ENCODE measurements at regions of chr15 and their contacts with region 1.

Region 1: DNA sequence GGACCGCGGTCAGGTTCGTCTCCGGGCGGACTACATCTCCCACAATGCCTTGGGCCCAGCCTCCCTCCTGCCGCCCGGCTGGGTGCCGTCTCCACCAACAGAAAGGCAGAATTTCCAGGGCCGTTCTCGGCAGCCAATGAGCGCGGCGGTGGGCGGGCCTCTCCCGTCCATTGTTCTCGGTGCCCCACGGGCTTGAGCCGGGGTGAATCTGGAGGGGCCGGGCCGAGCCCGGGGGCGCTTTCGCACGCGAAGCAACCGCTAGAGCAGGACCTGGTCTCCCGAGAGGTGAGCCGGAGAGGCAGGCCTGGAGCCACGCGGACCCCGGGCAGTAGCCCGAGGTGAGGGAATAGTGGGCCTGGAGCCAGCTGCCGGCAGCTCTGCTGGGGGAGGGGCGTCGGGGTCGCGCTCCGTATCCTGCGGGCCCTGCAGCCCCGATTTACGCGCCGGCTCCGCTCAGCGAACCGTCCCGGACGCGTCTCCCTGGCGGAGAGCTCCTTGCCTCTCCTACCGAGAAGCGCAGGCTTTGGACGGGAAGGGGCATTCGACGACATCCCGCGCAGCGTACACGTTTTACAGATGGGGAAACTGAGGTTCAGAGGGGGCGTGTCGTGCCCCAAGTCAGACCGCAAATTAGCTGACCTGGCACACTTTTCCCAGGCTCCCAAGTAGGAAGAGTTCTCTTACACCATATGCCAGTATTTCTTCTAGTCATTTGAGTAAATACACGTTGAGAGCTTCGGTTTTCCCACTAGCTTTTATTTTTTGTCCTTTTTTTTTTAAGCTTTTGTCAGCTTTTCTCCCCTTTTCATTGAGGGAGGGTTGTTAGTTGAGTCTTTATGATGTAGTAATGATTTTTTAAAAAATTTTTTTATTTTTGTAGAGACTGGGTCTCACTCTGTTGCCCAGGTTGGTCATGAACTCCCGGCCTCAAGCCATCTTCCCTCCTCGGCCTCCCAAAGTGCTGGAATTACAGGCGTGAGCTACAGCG is at the start of gene ZSCAN2:
- DNase-seq: peak; percentile 96
- H3K4me3 ChIP-seq: peak within 1 kb of the TSS; percentile 46 to 66 (median 54)
- H3K27ac ChIP-seq: peak within 1 kb of the TSS; percentile 56
- H3K4me1 ChIP-seq: no peaks in the 10 kb centered on the region
- H3K27me3 ChIP-seq: no peaks in the 10 kb centered on the region
- CTCF ChIP-seq: peak in 1 of 2 donors; percentile 10
- POLR2A ChIP-seq: peak; percentile 56
- total RNA-seq, gene ZSCAN2: 13.5 TPM in 2 replicates

Region 2: GRCh38 chr15:84633311-84634227 is 32.4 kb after region 1 on chr15:
- CTCF ChIA-PET with region 1: interaction called, 25 read pairs
- POLR2A ChIA-PET with region 1: no interaction called
- dilution Hi-C with region 1: no loop called
- intact Hi-C with region 1: loop called (anchors 1 kb)
- DNase-seq: peak; percentile 85
- H3K4me3 ChIP-seq: peak overlapping the region; percentile 44 to 66 (median 46)
- H3K27ac ChIP-seq: peak overlapping the region; percentile 28
- H3K4me1 ChIP-seq: peaks cover 26% of the 10 kb centered on the region
- H3K27me3 ChIP-seq: no peaks in the 10 kb centered on the region
- CTCF ChIP-seq: no peak
- POLR2A ChIP-seq: no peak

Region 3: DNA sequence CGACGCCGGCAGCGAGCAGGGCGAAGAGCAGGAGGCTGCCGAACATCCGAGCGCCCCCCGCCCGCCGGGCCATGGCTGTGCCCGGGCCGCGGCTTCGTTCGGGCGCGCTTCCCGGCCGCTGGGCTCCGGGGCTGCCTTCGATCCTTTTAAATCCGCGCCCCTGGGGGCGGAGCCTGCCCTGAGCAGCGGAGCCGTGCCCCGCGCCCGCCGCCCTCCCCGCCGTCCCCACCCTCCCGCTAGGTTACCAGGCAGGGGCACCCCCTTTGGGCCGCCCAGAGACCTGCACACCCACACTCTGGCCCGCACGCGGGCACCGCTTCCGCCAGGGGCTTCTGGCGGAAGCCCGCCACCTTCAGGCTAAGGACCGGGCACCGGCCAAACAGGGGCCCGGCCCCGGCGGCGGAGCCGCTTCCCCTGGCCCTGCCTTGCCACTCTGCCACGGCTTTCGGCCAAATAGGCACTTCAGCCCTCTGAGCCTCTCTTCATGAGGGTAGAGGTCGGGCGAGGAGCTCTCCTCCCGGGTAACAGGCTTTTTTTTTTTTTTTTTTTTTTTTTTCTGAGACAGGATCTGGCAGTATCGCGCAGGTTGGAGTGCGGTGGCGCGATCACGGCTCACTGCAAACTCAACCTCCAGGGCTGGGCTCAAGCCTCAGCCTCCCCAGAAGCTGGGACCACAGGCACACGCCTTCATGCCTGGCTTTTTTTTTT is 57.1 kb after region 1 on chr15 and contains the start of gene NMB:
- CTCF ChIA-PET with region 1: interaction called, 23 read pairs
- POLR2A ChIA-PET with region 1: no interaction called
- dilution Hi-C with region 1: no loop called
- intact Hi-C with region 1: loop called (anchors 1 kb)
- DNase-seq: peak; percentile 75
- H3K4me3 ChIP-seq: peak within 1 kb of the TSS; percentile 36 to 50 (median 47)
- H3K27ac ChIP-seq: peak within 1 kb of the TSS; percentile 49
- H3K4me1 ChIP-seq: peaks cover 23% of the 10 kb centered on the region
- H3K27me3 ChIP-seq: no peaks in the 10 kb centered on the region
- CTCF ChIP-seq: peak; percentile 41 to 56
- POLR2A ChIP-seq: no peak
- total RNA-seq, gene NMB: 9.6 and 9.8 TPM in 2 replicates

Region 4: DNA sequence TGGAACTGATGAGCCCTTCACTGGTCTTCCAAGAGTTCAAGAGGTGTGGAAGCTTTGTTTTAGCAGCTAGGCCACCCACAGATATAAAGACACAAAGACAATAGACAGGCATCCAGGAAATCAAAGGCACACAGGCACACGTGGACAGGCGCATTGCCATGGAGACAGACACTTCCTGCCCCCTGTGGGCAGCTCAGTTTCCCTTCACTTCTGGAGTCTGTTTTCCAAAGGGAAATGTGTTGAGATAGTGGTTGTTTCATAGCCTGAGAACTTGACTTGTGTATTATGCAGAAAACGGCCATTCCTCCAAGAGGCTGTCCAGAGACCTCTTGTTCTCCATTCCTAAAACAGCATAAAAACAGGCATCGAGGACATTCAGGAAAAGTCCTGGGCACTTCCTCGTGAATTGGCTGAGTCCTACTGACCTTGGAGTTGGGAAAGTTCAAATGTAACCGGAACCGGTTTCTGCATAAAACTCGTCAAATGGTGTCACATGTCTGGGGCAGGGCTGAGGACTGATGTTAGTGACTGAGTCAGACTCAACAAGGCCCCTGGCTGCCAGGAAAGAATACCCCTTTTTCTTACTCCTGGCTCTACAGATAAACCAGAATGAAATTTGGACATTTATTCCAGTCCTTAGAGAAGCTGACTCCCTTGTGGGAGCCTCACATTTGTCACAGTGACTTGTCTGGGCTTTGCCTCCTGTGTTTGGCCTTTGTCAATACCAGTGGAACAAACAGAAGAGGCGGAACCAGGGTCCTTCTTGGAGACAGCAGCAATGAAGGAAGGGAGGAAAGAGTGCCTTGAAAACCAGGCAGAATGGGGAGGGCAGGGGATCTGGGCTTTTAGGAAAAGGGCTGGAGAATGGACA is 217.4 kb after region 1 on chr15:
- CTCF ChIA-PET with region 1: interaction called, 16 read pairs
- POLR2A ChIA-PET with region 1: no interaction called
- dilution Hi-C with region 1: no loop called
- intact Hi-C with region 1: loop called (anchors 1 kb)
- DNase-seq: peak; percentile 91
- H3K4me3 ChIP-seq: peak overlapping the region in 2 of 3 experiments; percentile 57 to 58
- H3K27ac ChIP-seq: peak overlapping the region; percentile 88
- H3K4me1 ChIP-seq: peaks cover 42% of the 10 kb centered on the region
- H3K27me3 ChIP-seq: no peaks in the 10 kb centered on the region
- CTCF ChIP-seq: peak in 1 of 2 donors; percentile 2
- POLR2A ChIP-seq: peak; percentile 71

Region 5: GRCh38 chr15:84904419-84904818 is 303.3 kb after region 1 on chr15:
- CTCF ChIA-PET with region 1: no interaction called
- POLR2A ChIA-PET with region 1: no interaction called
- dilution Hi-C with region 1: no loop called
- intact Hi-C with region 1: no loop called
- DNase-seq: no peak
- H3K4me3 ChIP-seq: no peak overlapping the region
- H3K27ac ChIP-seq: no peak overlapping the region
- H3K4me1 ChIP-seq: no peaks in the 10 kb centered on the region
- H3K27me3 ChIP-seq: no peaks in the 10 kb centered on the region
- CTCF ChIP-seq: no peak
- POLR2A ChIP-seq: no peak

Region 6: DNA sequence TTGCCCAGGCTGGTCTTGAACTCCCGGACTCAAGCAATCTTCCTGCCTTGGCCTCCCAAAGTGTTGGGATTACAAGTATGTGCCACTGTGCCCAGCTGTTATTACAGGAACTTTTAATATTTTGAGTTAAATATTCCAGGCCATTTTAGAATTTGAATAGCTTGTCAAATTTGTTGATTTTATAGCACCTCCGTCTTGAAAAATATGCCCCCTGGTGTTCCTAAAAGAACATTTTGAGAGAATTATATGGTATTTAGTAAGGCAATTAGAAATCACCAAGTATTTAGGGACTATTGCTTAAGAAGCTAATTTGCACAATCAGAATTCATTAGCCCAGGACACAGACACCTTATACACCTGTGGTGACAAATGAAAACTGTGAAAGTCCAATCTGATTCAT is 404.2 kb after region 1 on chr15:
- CTCF ChIA-PET with region 1: interaction called, 18 read pairs
- POLR2A ChIA-PET with region 1: no interaction called
- dilution Hi-C with region 1: no loop called
- intact Hi-C with region 1: no loop called
- DNase-seq: no peak
- H3K4me3 ChIP-seq: no peak overlapping the region
- H3K27ac ChIP-seq: no peak overlapping the region
- H3K4me1 ChIP-seq: peaks cover 11% of the 10 kb centered on the region
- H3K27me3 ChIP-seq: no peaks in the 10 kb centered on the region
- CTCF ChIP-seq: peak in 1 of 2 donors; percentile 4
- POLR2A ChIP-seq: no peak

Region 7: GRCh38 chr15:85137489-85138168 is 536.5 kb after region 1 on chr15:
- CTCF ChIA-PET with region 1: no interaction called
- POLR2A ChIA-PET with region 1: no interaction called
- dilution Hi-C with region 1: no loop called
- intact Hi-C with region 1: no loop called
- DNase-seq: no peak
- H3K4me3 ChIP-seq: no peak overlapping the region
- H3K27ac ChIP-seq: no peak overlapping the region
- H3K4me1 ChIP-seq: peaks cover 12% of the 10 kb centered on the region
- H3K27me3 ChIP-seq: no peaks in the 10 kb centered on the region
- CTCF ChIP-seq: no peak
- POLR2A ChIP-seq: no peak

Measured in endothelial cell of umbilical vein (primary cell).